Activated CD4-positive, alpha-beta T cell treated with anti-CD3 and anti-CD28 coated beads, Interleukin-2, amount 10 ng/mL, durations not matched to agents 24 days and 14 days (primary cell): ENCODE measurements at regions of chr2 and their contacts with region 1.

Region 1: GRCh38 chr2:126776692-126777619 is 121.0 kb downstream of the GYPC start:
- DNase-seq: peak; percentile 95
- H3K4me3 Mint-ChIP-seq: peak overlapping the region; percentile 98
- H3K27ac Mint-ChIP-seq: peak overlapping the region; percentile 65
- H3K4me1 Mint-ChIP-seq: peaks cover 13% of the 10 kb centered on the region
- H3K27me3 Mint-ChIP-seq: peaks cover 30% of the 10 kb centered on the region

Region 2: GRCh38 chr2:126244937-126245336 is 532.0 kb before region 1 on chr2:
- intact Hi-C with region 1: loop called (anchors 10 kb)
- DNase-seq: peak; percentile 76
- H3K4me3 Mint-ChIP-seq: no peak overlapping the region
- H3K27ac Mint-ChIP-seq: no peak overlapping the region
- H3K4me1 Mint-ChIP-seq: no peaks in the 10 kb centered on the region
- H3K27me3 Mint-ChIP-seq: no peaks in the 10 kb centered on the region

Region 3: GRCh38 chr2:126399001-126399400 is 378.0 kb before region 1 on chr2:
- intact Hi-C with region 1: loop called (anchors 1 kb)
- DNase-seq: peak; percentile 74
- H3K4me3 Mint-ChIP-seq: no peak overlapping the region
- H3K27ac Mint-ChIP-seq: no peak overlapping the region
- H3K4me1 Mint-ChIP-seq: no peaks in the 10 kb centered on the region
- H3K27me3 Mint-ChIP-seq: no peaks in the 10 kb centered on the region

Region 4: DNA sequence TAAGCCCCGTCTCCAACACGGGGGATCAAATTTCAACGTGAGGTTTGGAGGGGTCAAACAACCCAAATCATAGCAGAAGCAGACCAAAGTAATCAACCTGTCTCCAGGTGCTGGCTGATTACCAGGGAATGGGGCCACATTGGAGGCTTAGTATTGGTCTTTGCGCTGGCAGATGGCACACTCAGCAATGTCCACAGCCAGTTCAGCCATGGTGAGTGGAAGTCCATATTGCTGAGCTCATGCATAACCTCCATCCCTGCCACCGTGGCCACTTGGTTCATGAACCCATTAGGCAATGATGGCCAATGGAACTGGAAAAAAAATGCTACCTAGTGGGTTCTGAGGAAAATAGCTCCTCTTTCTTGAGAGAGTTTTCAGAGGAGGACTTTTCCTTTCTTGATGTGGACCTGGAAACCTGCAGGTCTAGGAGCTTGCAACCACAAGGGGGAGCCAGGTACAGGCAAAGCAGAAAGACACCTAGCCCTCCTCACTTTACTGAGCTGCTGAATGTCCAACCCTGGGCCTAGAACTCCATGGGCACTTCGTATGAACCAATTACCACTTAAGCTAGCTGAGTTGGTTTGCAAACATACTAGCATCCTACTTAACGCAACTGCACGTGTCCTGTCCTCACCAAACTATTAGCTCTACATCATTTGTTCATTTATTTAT is 249.0 kb before region 1 on chr2:
- intact Hi-C with region 1: loop called (anchors 1 kb)
- DNase-seq: peak; percentile 90
- H3K4me3 Mint-ChIP-seq: no peak overlapping the region
- H3K27ac Mint-ChIP-seq: no peak overlapping the region
- H3K4me1 Mint-ChIP-seq: no peaks in the 10 kb centered on the region
- H3K27me3 Mint-ChIP-seq: no peaks in the 10 kb centered on the region

Region 5: DNA sequence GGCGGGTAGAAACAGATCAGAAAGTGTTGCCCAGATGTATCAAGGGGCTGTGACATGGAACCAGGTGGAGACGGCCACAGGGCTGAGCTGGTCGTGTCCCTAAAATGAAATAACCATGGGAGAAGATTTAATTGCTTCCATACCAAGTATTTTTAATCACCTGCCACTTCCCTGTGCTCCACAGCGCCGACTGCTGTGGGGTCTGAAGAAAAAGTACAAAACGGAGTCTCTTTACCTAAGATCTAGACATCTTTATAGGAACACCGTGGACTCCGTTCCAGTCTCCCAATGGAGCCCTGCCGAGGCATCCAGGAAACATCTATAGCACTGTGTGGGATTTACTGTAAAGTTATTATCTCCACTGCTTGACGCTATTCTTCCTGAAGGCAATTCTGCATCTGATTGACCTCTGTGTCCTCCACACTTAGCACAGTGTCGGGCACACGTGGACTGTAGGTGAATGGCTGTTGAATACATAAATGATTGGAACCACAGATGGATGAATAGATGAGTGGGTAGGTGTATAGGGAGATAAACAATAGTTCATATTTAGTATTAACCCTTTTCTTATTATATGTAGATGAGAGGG is 142.6 kb before region 1 on chr2:
- intact Hi-C with region 1: loop called (anchors 5 kb)
- DNase-seq: peak; percentile 75
- H3K4me3 Mint-ChIP-seq: no peak overlapping the region
- H3K27ac Mint-ChIP-seq: no peak overlapping the region
- H3K4me1 Mint-ChIP-seq: peaks cover 3% of the 10 kb centered on the region
- H3K27me3 Mint-ChIP-seq: peaks cover 26% of the 10 kb centered on the region

Region 6: DNA sequence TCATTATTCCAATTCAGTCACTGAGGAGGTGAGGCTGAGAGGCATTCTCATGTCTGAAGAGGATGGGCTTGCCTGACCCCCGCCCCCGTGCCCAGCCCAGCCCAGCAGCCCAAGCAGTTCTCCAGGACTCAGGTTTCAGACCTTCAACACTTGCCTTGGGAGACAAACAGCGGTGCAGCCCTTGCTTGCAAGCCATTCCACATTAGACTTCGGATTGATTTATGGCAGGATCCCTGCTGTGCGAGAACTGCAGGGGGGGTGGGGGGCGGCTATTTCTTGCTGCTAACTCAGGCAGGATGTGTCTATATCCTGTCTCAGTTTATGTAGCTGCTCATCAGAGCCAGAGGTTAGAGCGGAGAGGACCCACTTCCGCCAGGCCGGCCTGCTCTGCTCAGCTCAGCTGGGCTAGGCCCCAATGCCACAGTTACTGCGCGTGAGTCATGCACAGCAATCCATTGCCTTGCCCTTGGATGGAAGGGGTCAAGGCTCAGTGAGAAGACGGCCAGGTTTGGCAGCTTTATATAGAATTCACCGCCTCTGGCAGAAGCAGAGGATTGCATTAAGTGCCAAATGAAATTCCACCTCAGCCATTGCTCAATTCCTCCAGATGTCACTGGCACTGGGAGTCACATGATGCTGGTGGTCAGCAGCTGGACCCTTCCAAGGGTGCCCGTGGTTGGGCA is 119.2 kb before region 1 on chr2:
- intact Hi-C with region 1: loop called (anchors 2 kb)
- DNase-seq: peak; percentile 92
- H3K4me3 Mint-ChIP-seq: peak overlapping the region; percentile 92
- H3K27ac Mint-ChIP-seq: peak overlapping the region; percentile 98
- H3K4me1 Mint-ChIP-seq: peaks cover 55% of the 10 kb centered on the region
- H3K27me3 Mint-ChIP-seq: no peaks in the 10 kb centered on the region